ENCODE measurements at regions of chr17 and their contacts with region 1.

Region 1: DNA sequence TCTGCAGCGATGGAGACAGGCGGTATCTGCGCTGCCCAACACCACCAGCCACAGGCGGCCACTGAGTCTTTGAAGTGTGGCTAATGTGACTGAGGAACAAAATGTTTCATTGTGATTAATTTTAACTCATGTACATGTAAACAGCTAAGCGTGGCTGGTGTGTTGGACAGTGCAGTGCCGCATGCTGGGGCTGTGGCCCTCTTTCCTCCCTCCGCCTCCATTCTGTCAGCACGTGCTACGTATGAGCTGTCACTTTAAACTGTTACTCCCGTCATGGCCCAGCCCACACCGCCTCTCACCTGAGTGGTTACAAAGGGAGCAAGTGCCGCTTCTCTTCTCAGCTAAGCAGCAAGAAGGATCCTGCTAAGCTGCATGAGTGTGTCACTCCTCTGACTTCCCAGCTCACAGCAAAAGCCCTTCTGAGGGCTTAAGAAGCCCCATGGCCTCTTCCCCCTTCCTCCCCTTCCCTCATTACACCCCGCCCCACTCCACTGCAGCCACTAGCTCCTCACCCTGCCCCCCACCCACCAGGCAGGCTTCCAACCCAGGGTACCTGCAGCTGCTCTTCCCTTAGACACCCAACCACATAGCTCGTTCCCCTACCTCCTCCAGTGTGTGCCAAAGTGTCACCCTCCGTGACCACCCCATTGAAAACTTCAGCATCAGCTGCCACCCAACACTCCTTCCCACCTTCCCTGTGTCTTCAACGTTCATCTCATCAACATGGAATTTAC is 15.0 kb downstream of the HASPIN start:
- DNase-seq: peak in 8 of 9 experiments; percentile 42 to 83 (median 74)
- ATAC-seq: peak; percentile 87
- H3K4me3 ChIP-seq: no peak overlapping the region
- H3K4me3 Mint-ChIP-seq: peak overlapping the region; percentile 38
- H3K27ac ChIP-seq: peak overlapping the region in 1 of 2 experiments; percentile 2
- H3K27ac Mint-ChIP-seq: peak overlapping the region; percentile 88
- H3K4me1 ChIP-seq: peaks cover 36% of the 10 kb centered on the region
- H3K4me1 Mint-ChIP-seq: peaks cover 46% of the 10 kb centered on the region
- H3K27me3 ChIP-seq: no peaks in the 10 kb centered on the region
- H3K27me3 Mint-ChIP-seq: no peaks in the 10 kb centered on the region
- CTCF ChIP-seq: no peak

Region 2: GRCh38 chr17:3535253-3535995 is 203.3 kb before region 1 on chr17:
- CTCF ChIA-PET with region 1: no interaction called
- POLR2A ChIA-PET with region 1: no interaction called
- intact Hi-C with region 1: no loop called
- DNase-seq: peak; percentile 31 to 82 (median 52)
- ATAC-seq: peak; percentile 95
- H3K4me3 ChIP-seq: peak overlapping the region; percentile 39 to 42
- H3K4me3 Mint-ChIP-seq: peak overlapping the region; percentile 56
- H3K27ac ChIP-seq: peak overlapping the region in 1 of 2 experiments; percentile 60
- H3K27ac Mint-ChIP-seq: no peak overlapping the region
- H3K4me1 ChIP-seq: no peaks in the 10 kb centered on the region
- H3K4me1 Mint-ChIP-seq: peaks cover 9% of the 10 kb centered on the region
- H3K27me3 ChIP-seq: no peaks in the 10 kb centered on the region
- H3K27me3 Mint-ChIP-seq: peaks cover 9% of the 10 kb centered on the region
- CTCF ChIP-seq: peak; percentile 59

Region 3: GRCh38 chr17:3710951-3711383 is 27.8 kb before region 1 on chr17:
- CTCF ChIA-PET with region 1: interaction called, 10 read pairs
- POLR2A ChIA-PET with region 1: no interaction called
- intact Hi-C with region 1: no loop called
- DNase-seq: peak; percentile 30 to 96 (median 67)
- ATAC-seq: peak; percentile 97
- H3K4me3 ChIP-seq: no peak overlapping the region
- H3K4me3 Mint-ChIP-seq: peak overlapping the region; percentile 37
- H3K27ac ChIP-seq: peak overlapping the region in 1 of 2 experiments; percentile 62
- H3K27ac Mint-ChIP-seq: peak overlapping the region; percentile 86
- H3K4me1 ChIP-seq: peaks cover 31% of the 10 kb centered on the region
- H3K4me1 Mint-ChIP-seq: peaks cover 38% of the 10 kb centered on the region
- H3K27me3 ChIP-seq: no peaks in the 10 kb centered on the region
- H3K27me3 Mint-ChIP-seq: no peaks in the 10 kb centered on the region
- CTCF ChIP-seq: no peak

Region 4: GRCh38 chr17:3762922-3763776 is 24.4 kb after region 1 on chr17:
- CTCF ChIA-PET with region 1: interaction called, 102 read pairs
- POLR2A ChIA-PET with region 1: interaction called, 3 read pairs
- intact Hi-C with region 1: loop called (anchors 1 to 2 kb)
- DNase-seq: peak in 4 of 9 experiments; percentile 44 to 88 (median 75)
- ATAC-seq: peak; percentile 30
- H3K4me3 ChIP-seq: peak overlapping the region; percentile 16 to 45
- H3K4me3 Mint-ChIP-seq: peak overlapping the region; percentile 82
- H3K27ac ChIP-seq: peak overlapping the region; percentile 42 to 70
- H3K27ac Mint-ChIP-seq: peak overlapping the region; percentile 97
- H3K4me1 ChIP-seq: peaks cover 52% of the 10 kb centered on the region
- H3K4me1 Mint-ChIP-seq: peaks cover 50% of the 10 kb centered on the region
- H3K27me3 ChIP-seq: no peaks in the 10 kb centered on the region
- H3K27me3 Mint-ChIP-seq: no peaks in the 10 kb centered on the region
- CTCF ChIP-seq: no peak

Region 5: DNA sequence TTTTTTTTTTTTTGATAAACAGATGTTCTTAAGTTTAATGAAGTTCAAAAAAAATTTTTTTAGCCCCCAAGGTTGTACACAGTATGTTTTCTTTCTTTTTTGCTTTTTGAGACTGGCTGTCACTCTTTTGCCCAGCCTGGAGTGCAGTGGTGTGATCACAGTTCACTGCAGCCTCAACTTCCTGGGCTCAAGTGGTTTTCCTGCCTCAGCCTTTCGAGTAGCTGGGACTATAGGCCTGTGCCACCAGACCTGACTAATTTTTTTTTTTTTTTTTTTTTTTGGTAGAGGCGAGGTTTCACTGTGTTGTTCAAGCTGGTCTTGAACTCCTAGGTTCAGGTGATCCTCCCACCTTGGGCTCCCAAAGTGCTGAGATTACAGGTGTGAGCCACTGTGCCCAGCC is 49.5 kb after region 1 on chr17:
- CTCF ChIA-PET with region 1: interaction called, 10 read pairs
- POLR2A ChIA-PET with region 1: no interaction called
- intact Hi-C with region 1: no loop called
- DNase-seq: peak in 4 of 9 experiments; percentile 49 to 82 (median 70)
- ATAC-seq: peak; percentile 49
- H3K4me3 ChIP-seq: peak overlapping the region in 1 of 2 experiments; percentile 26
- H3K4me3 Mint-ChIP-seq: no peak overlapping the region
- H3K27ac ChIP-seq: peak overlapping the region; percentile 3 to 22
- H3K27ac Mint-ChIP-seq: peak overlapping the region; percentile 60
- H3K4me1 ChIP-seq: peaks cover 13% of the 10 kb centered on the region
- H3K4me1 Mint-ChIP-seq: peaks cover 39% of the 10 kb centered on the region
- H3K27me3 ChIP-seq: no peaks in the 10 kb centered on the region
- H3K27me3 Mint-ChIP-seq: no peaks in the 10 kb centered on the region
- CTCF ChIP-seq: no peak

Region 6: DNA sequence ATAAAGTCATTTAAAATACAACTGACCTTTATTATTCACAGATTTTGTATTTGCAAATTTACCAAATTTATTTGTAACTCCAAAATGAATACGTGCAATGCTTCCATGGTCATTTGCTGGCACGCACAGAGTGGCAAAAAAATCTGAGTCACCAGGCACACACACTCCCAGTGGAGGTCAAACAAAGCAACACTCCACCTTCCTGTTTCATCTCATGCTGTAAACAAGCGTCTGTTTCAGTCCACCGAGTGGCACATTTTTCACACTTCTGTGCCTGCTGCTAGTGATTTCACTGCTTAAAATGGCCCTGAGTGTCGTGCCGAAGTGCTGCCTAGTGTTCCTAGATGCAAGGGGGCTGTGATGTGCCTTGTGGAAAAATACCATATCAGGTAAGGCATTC is 80.1 kb after region 1 on chr17:
- CTCF ChIA-PET with region 1: interaction called, 20 read pairs
- POLR2A ChIA-PET with region 1: interaction called, 3 read pairs
- intact Hi-C with region 1: no loop called
- DNase-seq: no peak
- ATAC-seq: no peak
- H3K4me3 ChIP-seq: no peak overlapping the region
- H3K4me3 Mint-ChIP-seq: no peak overlapping the region
- H3K27ac ChIP-seq: no peak overlapping the region
- H3K27ac Mint-ChIP-seq: no peak overlapping the region
- H3K4me1 ChIP-seq: no peaks in the 10 kb centered on the region
- H3K4me1 Mint-ChIP-seq: no peaks in the 10 kb centered on the region
- H3K27me3 ChIP-seq: no peaks in the 10 kb centered on the region
- H3K27me3 Mint-ChIP-seq: no peaks in the 10 kb centered on the region
- CTCF ChIP-seq: no peak

Region 7: DNA sequence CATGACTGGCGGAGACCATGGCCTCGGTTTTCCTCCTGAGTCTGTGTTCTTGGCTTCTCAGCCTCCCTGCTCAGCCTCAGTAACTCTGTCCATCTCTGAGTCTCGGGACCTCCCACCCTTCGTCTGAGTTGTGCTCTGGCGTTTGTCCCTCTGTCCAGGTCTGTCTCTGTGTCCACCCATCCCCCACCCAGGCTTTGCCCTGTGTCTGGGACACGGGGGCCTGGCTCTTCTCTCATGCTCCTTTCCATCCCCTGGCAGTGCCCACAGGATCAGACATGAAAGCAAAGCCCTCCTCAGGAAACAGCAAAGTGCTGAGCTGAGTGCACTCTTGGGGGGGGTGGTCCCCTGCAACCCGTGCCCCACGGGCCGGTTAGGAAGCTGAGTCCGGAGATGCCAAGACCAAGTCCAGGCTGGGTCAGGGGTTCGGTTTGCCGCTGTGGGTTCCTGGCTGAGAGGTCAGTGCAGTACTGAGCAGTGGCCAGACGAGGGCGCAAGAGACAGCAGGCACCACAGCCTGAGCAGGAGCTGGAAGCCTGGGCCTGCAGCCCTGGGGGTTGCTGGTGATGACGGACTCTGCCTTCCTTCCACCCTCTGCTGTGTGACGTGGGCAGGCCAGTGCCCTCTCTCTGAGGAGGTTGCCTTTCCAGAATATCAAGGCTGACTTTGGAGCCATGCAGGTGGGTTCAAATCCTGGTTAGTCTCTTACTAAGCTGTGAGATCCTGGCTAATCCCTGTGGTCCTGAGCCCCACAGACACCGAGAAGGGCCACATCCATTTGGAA is 175.0 kb after region 1 on chr17:
- CTCF ChIA-PET with region 1: interaction called, 4 read pairs
- POLR2A ChIA-PET with region 1: no interaction called
- intact Hi-C with region 1: loop called (anchors 1 to 5 kb)
- DNase-seq: peak; percentile 70 to 89 (median 83)
- ATAC-seq: peak; percentile 47
- H3K4me3 ChIP-seq: no peak overlapping the region
- H3K4me3 Mint-ChIP-seq: no peak overlapping the region
- H3K27ac ChIP-seq: peak overlapping the region in 1 of 2 experiments; percentile 16
- H3K27ac Mint-ChIP-seq: peak overlapping the region; percentile 50
- H3K4me1 ChIP-seq: peaks cover 59% of the 10 kb centered on the region
- H3K4me1 Mint-ChIP-seq: peaks cover 65% of the 10 kb centered on the region
- H3K27me3 ChIP-seq: no peaks in the 10 kb centered on the region
- H3K27me3 Mint-ChIP-seq: no peaks in the 10 kb centered on the region
- CTCF ChIP-seq: peak; percentile 94